GM10248 (cell line): ENCODE measurements at regions of chr13 and their contacts with region 1.

Region 1: DNA sequence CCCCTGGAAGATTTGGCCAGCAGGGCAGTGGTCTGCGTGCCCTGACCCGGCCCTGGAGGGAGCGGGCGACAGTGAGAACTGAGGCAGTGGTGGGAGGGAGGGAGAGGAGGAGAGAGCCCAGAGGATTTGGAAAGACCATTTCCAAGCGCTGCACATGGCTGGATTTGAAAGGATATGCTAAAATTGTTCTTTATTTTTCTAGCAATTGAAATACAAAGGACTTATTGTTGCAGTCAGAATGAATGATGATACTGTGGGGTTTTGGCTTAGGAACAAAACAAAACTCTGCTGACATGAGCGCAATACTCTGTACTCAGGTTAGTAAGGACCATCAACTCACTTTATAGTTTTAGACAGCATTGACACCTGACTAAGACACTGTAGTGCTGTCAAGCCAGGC is 69.5 kb downstream of the TNFRSF19 start:
- DNase-seq: no peak
- CTCF ChIP-seq: no peak

Region 2: GRCh38 chr13:23531446-23531845 is 108.2 kb before region 1 on chr13:
- CTCF ChIA-PET with region 1: no interaction called
- POLR2A ChIA-PET with region 1: no interaction called
- DNase-seq: no peak
- CTCF ChIP-seq: no peak

Region 3: DNA sequence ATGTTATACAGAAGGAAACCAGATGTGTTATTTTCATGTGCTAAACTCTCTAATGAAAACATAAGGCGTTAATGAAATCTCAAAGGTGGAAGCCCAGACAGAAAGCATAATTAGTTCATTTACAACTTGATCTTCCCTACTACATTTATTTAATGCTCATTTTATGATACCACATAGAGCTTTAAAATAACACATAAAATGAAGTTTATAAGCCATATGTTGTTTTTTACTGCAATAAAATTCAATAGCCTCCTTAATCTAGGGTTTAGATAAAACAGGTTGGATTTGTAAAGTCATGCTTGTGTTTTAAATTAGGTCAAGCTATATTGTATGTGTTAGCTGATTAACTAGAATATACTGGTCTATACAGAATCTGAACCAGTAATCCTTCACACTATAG is 11.8 kb after region 1 on chr13:
- CTCF ChIA-PET with region 1: interaction called, 14 read pairs
- POLR2A ChIA-PET with region 1: no interaction called
- DNase-seq: no peak
- CTCF ChIP-seq: no peak